ENCODE measurements at regions of chr3 and their contacts with region 1.

Region 1: GRCh38 chr3:190120269-190121060 is at the start of gene P3H2:
- DNase-seq: peak; percentile 84 to 91
- H3K4me3 ChIP-seq: peak within 1 kb of the TSS; percentile 90
- H3K27ac ChIP-seq: no peak within 1 kb of the TSS
- H3K4me1 ChIP-seq: peaks cover 42% of the 10 kb centered on the region
- H3K27me3 ChIP-seq: no peaks in the 10 kb centered on the region
- CTCF ChIP-seq: peak; percentile 55; the same call in 1 of the 2 replicates
- total RNA-seq, gene P3H2: 20.9 and 26.2 TPM in 2 replicates

Region 2: DNA sequence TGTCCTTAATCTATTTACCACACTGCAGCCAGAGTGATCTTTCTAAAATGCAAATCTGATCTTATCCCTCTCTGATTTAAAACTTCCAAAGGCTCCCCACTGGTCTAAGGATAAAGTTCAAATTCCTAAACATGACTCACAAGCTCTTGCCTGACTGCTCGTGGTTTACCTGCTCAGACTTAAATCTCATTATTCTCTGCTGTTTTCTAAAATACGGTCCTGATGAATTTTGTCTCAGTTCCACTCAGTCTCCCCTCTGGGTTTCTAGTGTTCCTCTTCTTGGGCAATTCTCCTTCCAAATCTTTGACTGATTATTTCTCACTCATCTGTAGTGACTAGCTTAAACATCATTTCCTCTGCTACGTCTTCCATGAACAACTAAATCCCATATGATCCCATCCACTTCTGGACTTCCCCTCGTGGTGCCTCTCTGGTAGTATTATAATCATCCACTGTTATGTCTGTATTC is 108.1 kb before region 1 on chr3:
- CTCF ChIA-PET with region 1: interaction called, 16 read pairs
- POLR2A ChIA-PET with region 1: no interaction called
- intact Hi-C with region 1: loop called (anchors 1 kb)
- DNase-seq: peak; percentile 20 to 91
- H3K4me3 ChIP-seq: peak overlapping the region; percentile 25; the same call in 1 of the 2 replicates
- H3K27ac ChIP-seq: peak overlapping the region; percentile 74
- H3K4me1 ChIP-seq: peaks cover 45% of the 10 kb centered on the region
- H3K27me3 ChIP-seq: no peaks in the 10 kb centered on the region
- CTCF ChIP-seq: no peak

Region 3: GRCh38 chr3:190017521-190018288 is 102.8 kb before region 1 on chr3:
- CTCF ChIA-PET with region 1: interaction called, 16 read pairs
- POLR2A ChIA-PET with region 1: no interaction called
- intact Hi-C with region 1: loop called (anchors 1 kb)
- DNase-seq: peak; percentile 55 to 65
- H3K4me3 ChIP-seq: no peak overlapping the region
- H3K27ac ChIP-seq: no peak overlapping the region
- H3K4me1 ChIP-seq: peaks cover 24% of the 10 kb centered on the region
- H3K27me3 ChIP-seq: no peaks in the 10 kb centered on the region
- CTCF ChIP-seq: peak; percentile 49; the same call in 1 of the 2 replicates

Region 4: DNA sequence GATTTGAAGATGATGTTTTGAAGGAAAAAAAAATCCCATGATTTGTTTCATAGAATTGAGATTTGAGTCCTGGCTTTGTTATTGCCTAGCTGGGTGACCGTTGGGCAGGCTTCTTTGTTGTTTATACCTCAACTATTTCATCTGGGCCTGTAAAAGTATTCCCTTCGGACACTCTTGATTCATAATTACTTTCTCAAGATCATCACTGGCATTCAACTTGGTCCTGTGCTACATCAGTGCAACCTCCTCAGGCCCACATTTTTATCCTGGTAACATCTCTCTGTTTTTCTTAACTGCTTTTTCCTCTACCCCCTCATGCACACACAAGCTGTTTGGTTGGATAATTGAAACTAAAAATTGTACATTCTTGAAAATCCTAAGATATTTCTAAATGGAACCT is 67.7 kb after region 1 on chr3:
- CTCF ChIA-PET with region 1: no interaction called
- POLR2A ChIA-PET with region 1: no interaction called
- intact Hi-C with region 1: loop called (anchors 5 kb)
- DNase-seq: no peak
- H3K4me3 ChIP-seq: no peak overlapping the region
- H3K27ac ChIP-seq: no peak overlapping the region
- H3K4me1 ChIP-seq: no peaks in the 10 kb centered on the region
- H3K27me3 ChIP-seq: no peaks in the 10 kb centered on the region
- CTCF ChIP-seq: no peak